ENCODE measurements at regions of chr3 and their contacts with region 1.

Region 1: GRCh38 chr3:100316641-100317069 is 17.9 kb upstream of the NIT2 start:
- DNase-seq: peak; percentile 55
- ATAC-seq: peak; percentile 89
- H3K4me3 Mint-ChIP-seq: no peak overlapping the region
- H3K27ac Mint-ChIP-seq: no peak overlapping the region
- H3K4me1 Mint-ChIP-seq: peaks cover 15% of the 10 kb centered on the region
- H3K27me3 Mint-ChIP-seq: no peaks in the 10 kb centered on the region
- CTCF ChIP-seq: peak; percentile 70

Region 2: GRCh38 chr3:100334488-100335351 is 18.1 kb after region 1 on chr3 and contains the start of gene NIT2:
- CTCF ChIA-PET with region 1: interaction called, 15 read pairs
- POLR2A ChIA-PET with region 1: interaction called, 3 read pairs
- intact Hi-C with region 1: no loop called
- DNase-seq: peak; percentile 89
- ATAC-seq: peak; percentile 98
- H3K4me3 Mint-ChIP-seq: peak within 1 kb of the TSS; percentile 85
- H3K27ac Mint-ChIP-seq: peak within 1 kb of the TSS; percentile 93
- H3K4me1 Mint-ChIP-seq: peaks cover 15% of the 10 kb centered on the region
- H3K27me3 Mint-ChIP-seq: no peaks in the 10 kb centered on the region
- CTCF ChIP-seq: no peak
- total RNA-seq, gene NIT2: 64.2 TPM

Region 3: GRCh38 chr3:100590114-100590839 is 273.6 kb after region 1 on chr3:
- CTCF ChIA-PET with region 1: interaction called, 18 read pairs
- POLR2A ChIA-PET with region 1: no interaction called
- intact Hi-C with region 1: loop called (anchors 2 kb)
- DNase-seq: peak; percentile 76
- ATAC-seq: peak; percentile 97
- H3K4me3 Mint-ChIP-seq: no peak overlapping the region
- H3K27ac Mint-ChIP-seq: no peak overlapping the region
- H3K4me1 Mint-ChIP-seq: peaks cover 3% of the 10 kb centered on the region
- H3K27me3 Mint-ChIP-seq: no peaks in the 10 kb centered on the region
- CTCF ChIP-seq: peak; percentile 83